H1 (cell line): ENCODE measurements at regions of chr20 and their contacts with region 1.

Region 1: GRCh38 chr20:38748097-38748860 is at the start of gene ACTR5:
- DNase-seq: peak in 1 of 2 experiments; percentile 99
- H3K4me3 ChIP-seq: peak within 1 kb of the TSS; percentile 62 to 90 (median 88)
- H3K27ac ChIP-seq: peak within 1 kb of the TSS; percentile 80; the same call in 1 of the 2 replicates
- H3K4me1 ChIP-seq: peaks cover 3 to 7% (median 6%) of the 10 kb centered on the region in 4 experiments; a peak in 4 of 7 replicates
- H3K27me3 ChIP-seq: peaks cover 2 to 12% (median 11%) of the 10 kb centered on the region in 4 experiments
- CTCF ChIP-seq: 0 out of 4 replicates have a peak, but pooled peaks of 1 of the 3 experiments have one; percentile 7
- EP300 ChIP-seq: no peak
- POLR2A ChIP-seq: peak in 1 of 2 experiments; percentile 78; a peak in 2 of 3 replicates
- RAD21 ChIP-seq: no peak
- total RNA-seq, gene ACTR5: 14.1 and 14.4 TPM in 2 replicates

Region 2: DNA sequence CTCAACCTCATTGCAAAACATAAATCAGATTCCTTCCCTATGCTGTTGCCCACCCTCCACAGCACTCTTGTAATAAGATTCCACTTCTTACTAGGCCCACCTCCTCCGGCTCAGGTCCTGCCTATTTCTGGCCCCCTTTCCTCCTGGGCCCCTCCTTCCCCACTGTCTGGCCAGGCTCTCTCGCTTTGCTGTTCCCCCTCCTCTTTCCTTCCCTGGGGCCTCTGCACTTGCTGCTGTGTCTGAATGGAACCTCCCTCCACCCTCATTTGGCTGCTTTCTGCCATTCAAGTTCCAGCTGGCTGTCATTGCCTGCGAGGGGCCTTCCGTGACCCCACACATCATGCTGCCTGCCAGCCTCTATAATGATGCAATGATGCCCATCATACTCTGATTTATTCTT is 107.8 kb before region 1 on chr20:
- CTCF ChIA-PET with region 1: interaction called, 22 read pairs
- POLR2A ChIA-PET with region 1: no interaction called
- DNase-seq: no peak
- H3K4me3 ChIP-seq: no peak overlapping the region
- H3K27ac ChIP-seq: no peak overlapping the region
- H3K4me1 ChIP-seq: peaks cover 0 to 2% (median under 1%) of the 10 kb centered on the region in 4 experiments; a peak in 2 of 7 replicates
- H3K27me3 ChIP-seq: peaks cover 3 to 12% (median 9%) of the 10 kb centered on the region in 4 experiments
- CTCF ChIP-seq: no peak
- EP300 ChIP-seq: no peak
- POLR2A ChIP-seq: no peak
- RAD21 ChIP-seq: no peak

Region 3: DNA sequence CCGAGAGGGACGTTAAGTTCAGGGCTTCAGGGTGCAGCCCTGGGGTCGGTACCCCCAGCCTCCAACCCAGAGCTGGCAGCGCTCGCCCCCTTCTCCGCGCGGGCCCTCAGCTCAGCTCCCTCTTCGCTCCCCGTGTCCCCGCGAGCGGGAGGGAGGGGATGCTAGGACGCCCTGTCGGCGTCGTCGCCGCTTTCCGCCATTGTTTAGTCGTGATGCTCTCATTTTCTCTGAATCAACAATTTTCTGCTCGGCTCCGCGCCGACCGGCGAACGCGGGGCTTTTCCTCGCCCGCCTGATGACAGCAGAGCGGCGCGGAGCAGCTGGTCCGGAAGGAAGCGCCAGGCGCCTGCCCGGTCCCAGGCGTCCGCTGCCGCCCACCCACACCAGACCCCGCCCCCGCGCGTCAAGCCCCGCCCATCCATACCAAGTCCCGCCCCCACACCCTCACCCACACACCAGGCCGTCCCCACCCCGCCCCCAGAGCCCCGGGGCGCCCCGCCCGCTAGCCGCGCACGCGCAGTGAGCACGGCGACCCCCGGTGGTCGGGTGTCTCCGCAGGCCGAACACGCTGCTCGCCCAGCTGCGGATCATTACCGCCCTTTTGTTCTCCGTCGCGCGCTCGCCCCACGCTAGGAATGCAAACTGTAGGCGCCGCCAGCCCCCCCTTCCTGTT is 74.1 kb before region 1 on chr20:
- CTCF ChIA-PET with region 1: interaction called, 13 read pairs
- POLR2A ChIA-PET with region 1: no interaction called
- DNase-seq: peak; percentile 71 to 91
- H3K4me3 ChIP-seq: peak overlapping the region; percentile 60 to 86 (median 69)
- H3K27ac ChIP-seq: no peak overlapping the region
- H3K4me1 ChIP-seq: peaks cover 2 to 17% (median 10%) of the 10 kb centered on the region in 4 experiments; a peak in 5 of 7 replicates
- H3K27me3 ChIP-seq: peaks cover 3 to 38% (median 18%) of the 10 kb centered on the region in 4 experiments
- CTCF ChIP-seq: no peak
- EP300 ChIP-seq: no peak
- POLR2A ChIP-seq: peak in 1 of 2 experiments; percentile 42; a peak in 1 of 3 replicates
- RAD21 ChIP-seq: no peak

Region 4: GRCh38 chr20:38779247-38780097 is 31.2 kb after region 1 on chr20:
- CTCF ChIA-PET with region 1: interaction called, 17 read pairs
- POLR2A ChIA-PET with region 1: interaction called, 5 read pairs
- DNase-seq: peak in 1 of 2 experiments; percentile 70
- H3K4me3 ChIP-seq: peak overlapping the region in 2 of 4 experiments; percentile 33 to 46; a peak in 5 of 8 replicates
- H3K27ac ChIP-seq: peak overlapping the region; percentile 12; the same call in 1 of the 2 replicates
- H3K4me1 ChIP-seq: peaks cover 3 to 8% (median 7%) of the 10 kb centered on the region in 4 experiments; a peak in 5 of 7 replicates
- H3K27me3 ChIP-seq: no peaks in the 10 kb centered on the region
- CTCF ChIP-seq: no peak
- EP300 ChIP-seq: no peak
- POLR2A ChIP-seq: peak in 1 of 2 experiments; percentile 59; a peak in 2 of 3 replicates
- RAD21 ChIP-seq: no peak

Region 5: DNA sequence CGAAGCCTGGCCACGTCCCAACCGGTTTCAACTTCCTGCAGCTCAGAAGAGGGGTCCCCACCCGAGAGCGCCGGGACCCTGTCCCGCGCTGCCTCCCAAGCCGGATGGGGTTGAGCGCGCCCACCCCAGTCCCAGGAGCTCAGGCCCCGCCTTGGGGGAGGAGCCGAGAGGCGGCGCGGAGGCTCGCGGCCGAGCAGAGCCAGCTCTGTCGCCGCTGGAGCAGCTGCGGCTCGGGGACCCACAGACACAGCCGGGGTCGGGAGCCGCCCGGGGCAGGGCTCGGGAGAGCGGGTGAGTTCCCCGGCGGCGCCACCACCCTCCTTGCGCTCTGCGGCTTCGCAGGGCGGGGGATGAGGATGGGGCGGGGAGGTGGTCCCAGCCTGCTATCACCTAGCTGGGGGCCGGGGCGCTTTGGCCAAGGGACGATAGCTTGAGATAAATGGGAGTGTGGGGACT is 57.3 kb after region 1 on chr20 and contains the start of gene PPP1R16B:
- CTCF ChIA-PET with region 1: interaction called, 10 read pairs
- POLR2A ChIA-PET with region 1: interaction called, 3 read pairs
- DNase-seq: peak in 1 of 2 experiments; percentile 87
- H3K4me3 ChIP-seq: peak within 1 kb of the TSS; percentile 62 to 87 (median 63)
- H3K27ac ChIP-seq: no peak within 1 kb of the TSS
- H3K4me1 ChIP-seq: peaks cover 13 to 18% (median 15%) of the 10 kb centered on the region in 4 experiments
- H3K27me3 ChIP-seq: peaks cover 4 to 25% (median 17%) of the 10 kb centered on the region in 4 experiments; a peak in 6 of 7 replicates
- CTCF ChIP-seq: no peak
- EP300 ChIP-seq: no peak
- POLR2A ChIP-seq: peak in 1 of 2 experiments; percentile 73; a peak in 1 of 3 replicates
- RAD21 ChIP-seq: no peak
- total RNA-seq, gene PPP1R16B: 8.9 and 9.7 TPM in 2 replicates